Heart left ventricle (tissue), 16 donors: ENCODE measurements at regions of chr18 and their contacts with region 1.

Region 1: GRCh38 chr18:8951491-8951890 is 151.0 kb upstream of the NDUFV2 start:
- DNase-seq: no peak
- ATAC-seq: no peak
- H3K4me3 ChIP-seq: no peak overlapping the region
- H3K27ac ChIP-seq: no peak overlapping the region
- H3K4me1 ChIP-seq: no peaks in the 10 kb centered on the region
- H3K27me3 ChIP-seq: no peaks in the 10 kb centered on the region
- CTCF ChIP-seq: no peak
- POLR2A ChIP-seq: no peak

Region 2: GRCh38 chr18:8870528-8870927 is 81.0 kb before region 1 on chr18:
- intact Hi-C with region 1: loop called in 1 of 10 experiments (anchors 10 kb)
- DNase-seq: no peak
- ATAC-seq: no peak
- H3K4me3 ChIP-seq: no peak overlapping the region
- H3K27ac ChIP-seq: no peak overlapping the region
- H3K4me1 ChIP-seq: no peaks in the 10 kb centered on the region
- H3K27me3 ChIP-seq: peaks cover 0 to 12% (median 0%) of the 10 kb centered on the region in 9 donors
- CTCF ChIP-seq: no peak
- POLR2A ChIP-seq: no peak